GM10248 (cell line): ENCODE measurements at regions of chr5 and their contacts with region 1.

Region 1: GRCh38 chr5:1479581-1480188 is 34.4 kb upstream of the SLC6A3 start:
- DNase-seq: peak; percentile 68
- CTCF ChIP-seq: peak; percentile 59

Region 2: DNA sequence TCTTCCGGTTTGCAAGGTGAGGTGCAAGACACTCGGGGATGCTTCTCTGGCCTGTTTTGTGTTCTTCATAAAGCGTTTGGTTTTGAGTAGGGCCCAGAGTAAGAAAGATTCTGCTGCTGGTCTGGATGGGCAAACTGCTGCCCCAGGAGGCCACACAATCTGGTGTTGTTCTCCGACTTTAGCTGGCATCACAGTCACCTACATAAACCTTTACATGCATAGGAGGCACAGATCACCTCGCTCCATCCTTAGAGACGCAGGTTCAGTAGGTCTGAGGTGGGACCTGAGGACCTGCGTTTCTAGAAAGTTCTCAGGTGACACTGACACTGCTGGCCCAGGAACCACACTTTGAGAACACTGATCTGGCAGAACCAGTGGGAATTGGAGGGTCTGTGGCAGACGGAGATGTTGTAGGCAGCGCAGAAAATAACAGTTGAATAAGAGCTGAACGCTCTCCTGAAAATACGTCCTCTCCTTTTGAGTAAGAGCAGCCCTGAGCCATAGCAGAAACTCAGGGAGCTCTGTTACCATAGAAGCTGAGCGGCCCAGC is 30.5 kb before region 1 on chr5:
- CTCF ChIA-PET with region 1: no interaction called
- POLR2A ChIA-PET with region 1: no interaction called
- DNase-seq: no peak
- CTCF ChIP-seq: no peak

Region 3: GRCh38 chr5:1468629-1469527 is 10.8 kb before region 1 on chr5:
- CTCF ChIA-PET with region 1: interaction called, 16 read pairs
- POLR2A ChIA-PET with region 1: interaction called, 4 read pairs
- DNase-seq: no peak
- CTCF ChIP-seq: no peak

Region 4: DNA sequence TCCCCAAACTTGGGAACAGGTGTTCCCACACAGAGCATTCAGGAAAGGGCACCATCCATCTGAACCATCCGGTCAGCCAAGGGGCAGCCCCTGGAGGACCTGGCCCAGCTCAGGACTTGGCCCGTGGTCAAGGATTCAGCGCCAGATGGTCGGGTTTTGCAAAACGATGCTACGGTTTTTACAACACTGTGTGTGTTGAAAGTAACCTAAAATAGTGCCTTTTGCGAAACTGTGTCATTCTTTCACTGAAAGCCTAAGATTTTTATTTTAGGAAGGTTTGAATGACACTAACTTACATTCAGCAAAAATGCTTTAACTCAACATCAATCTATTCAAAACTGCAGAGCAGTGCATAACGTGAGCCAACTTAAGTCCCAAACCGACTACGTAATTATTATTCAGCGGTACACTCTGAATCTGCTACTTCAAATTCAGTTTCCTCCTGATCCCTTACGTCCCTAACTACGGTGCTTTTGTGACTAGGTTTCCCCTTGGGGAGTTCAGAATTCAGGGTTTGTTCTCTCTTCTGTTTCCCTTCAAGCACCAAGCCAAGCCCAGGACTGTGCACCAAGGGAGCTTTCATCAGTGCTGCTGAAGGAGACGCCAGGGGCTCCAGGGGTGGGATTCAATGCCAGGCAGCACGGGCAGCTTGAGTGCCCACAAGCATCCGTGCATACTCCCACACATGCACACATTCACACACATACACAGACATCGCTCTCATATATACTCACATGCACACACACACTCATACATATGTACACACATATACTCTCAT is 18.3 kb after region 1 on chr5:
- CTCF ChIA-PET with region 1: interaction called, 26 read pairs
- POLR2A ChIA-PET with region 1: interaction called, 29 read pairs
- DNase-seq: no peak
- CTCF ChIP-seq: no peak

Region 5: GRCh38 chr5:1503241-1504068 is 23.8 kb after region 1 on chr5:
- CTCF ChIA-PET with region 1: interaction called, 26 read pairs
- POLR2A ChIA-PET with region 1: interaction called, 29 read pairs
- DNase-seq: no peak
- CTCF ChIP-seq: no peak

Region 6: DNA sequence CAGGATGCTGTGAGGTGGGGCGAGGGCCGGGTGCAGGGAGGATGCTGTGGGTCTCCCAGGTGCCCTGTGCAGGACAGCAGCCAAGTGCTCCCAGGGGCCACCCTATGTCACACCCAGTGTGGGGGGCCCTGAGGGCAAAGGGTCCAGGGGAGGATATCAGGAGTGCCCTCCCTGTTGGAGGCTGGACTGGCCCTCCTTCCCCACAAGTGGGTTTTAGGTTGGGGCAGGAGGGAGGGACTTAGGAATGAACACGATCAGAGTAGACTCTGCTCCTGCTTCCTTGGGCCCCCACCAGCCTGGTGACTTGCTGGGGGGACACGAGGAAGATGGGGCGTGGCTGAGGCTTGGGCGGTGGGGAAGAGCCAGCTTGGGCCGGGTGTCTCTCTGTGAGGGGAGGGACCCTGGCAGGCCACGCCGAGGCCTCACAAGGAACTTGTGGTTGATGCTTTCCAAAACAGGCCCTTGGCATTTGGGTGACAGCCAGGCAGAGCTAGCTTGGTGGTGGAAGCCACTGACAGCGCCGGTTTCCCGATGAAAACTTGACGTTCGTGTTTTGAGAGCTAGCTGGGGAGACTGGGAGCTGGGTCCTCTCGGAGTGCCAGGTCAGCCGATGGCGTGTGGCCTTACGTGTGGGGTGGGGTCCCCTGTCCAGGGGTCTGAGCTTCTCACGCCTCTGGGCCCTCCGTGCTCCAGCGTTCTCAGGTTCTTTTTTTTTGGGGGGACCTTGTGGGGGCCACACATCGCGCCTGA is 173.1 kb after region 1 on chr5:
- CTCF ChIA-PET with region 1: no interaction called
- POLR2A ChIA-PET with region 1: no interaction called
- DNase-seq: no peak
- CTCF ChIP-seq: no peak